RWPE1 (cell line): ENCODE measurements at regions of chr20 and their contacts with region 1.

Region 1: GRCh38 chr20:47428164-47428563 is 71.7 kb upstream of the ZMYND8 start:
- DNase-seq: no peak
- H3K27ac ChIP-seq: no peak overlapping the region
- CTCF ChIP-seq: no peak

Region 2: GRCh38 chr20:47233333-47234188 is 194.6 kb before region 1 on chr20:
- CTCF ChIA-PET with region 1: interaction called, 10 read pairs
- POLR2A ChIA-PET with region 1: no interaction called
- DNase-seq: no peak
- H3K27ac ChIP-seq: peak overlapping the region; percentile 40
- CTCF ChIP-seq: no peak